ENCODE measurements at regions of chr3 and their contacts with region 1.

Region 1: DNA sequence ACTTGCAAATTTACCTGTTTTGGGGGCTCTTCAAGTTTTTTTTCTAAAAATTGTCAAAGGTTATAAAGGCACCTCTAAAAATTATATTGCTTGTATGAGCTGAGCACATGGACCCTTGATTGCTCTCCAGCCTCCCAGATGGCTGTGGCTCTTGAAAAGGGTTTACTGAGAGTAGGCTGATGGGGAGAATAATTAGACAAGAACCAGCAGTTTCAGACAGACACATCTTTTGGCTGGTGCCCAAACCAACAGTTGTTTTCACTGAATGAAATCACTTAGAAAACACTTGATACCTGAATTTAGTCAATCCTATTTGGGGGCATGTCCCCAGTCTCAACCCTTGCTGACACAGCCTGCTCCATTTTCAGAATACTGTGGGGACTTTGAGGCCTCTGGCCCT is 217.6 kb downstream of the KBTBD8 start:
- DNase-seq: no peak
- ATAC-seq: no peak
- H3K4me3 ChIP-seq: no peak overlapping the region
- H3K27ac ChIP-seq: no peak overlapping the region
- H3K4me1 ChIP-seq: no peaks in the 10 kb centered on the region
- H3K27me3 ChIP-seq: no peaks in the 10 kb centered on the region
- CTCF ChIP-seq: no peak

Region 2: DNA sequence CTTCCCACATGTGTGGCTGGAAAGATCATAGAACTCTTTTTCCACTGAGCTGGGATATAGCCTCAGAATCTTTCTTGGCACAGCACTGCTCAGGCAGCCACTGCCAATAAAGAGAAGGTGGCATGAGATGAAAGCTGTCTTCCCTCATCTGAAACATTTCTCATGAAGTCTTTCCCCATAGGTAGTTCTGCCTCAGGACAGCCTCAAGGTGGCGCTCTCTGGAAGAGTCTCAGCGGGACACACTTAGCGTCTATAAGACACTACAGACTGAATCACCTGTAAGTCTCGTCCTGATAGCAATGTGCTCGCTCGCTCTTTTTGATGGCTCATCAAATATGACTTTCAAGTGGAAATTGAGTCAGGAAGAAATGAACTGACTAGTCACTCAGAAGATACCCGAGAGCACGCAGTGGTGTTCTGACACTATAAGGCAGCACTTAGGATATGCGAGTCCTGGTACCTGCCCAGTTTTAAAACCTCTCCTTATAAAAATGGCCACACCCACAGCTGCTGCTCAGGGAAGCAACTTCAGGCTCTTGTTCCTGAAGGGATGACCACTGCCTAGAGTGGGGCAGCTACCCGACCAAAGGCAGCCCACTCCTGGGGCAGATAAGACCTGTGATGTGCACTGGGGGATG is 169.2 kb after region 1 on chr3:
- CTCF ChIA-PET with region 1: no interaction called
- POLR2A ChIA-PET with region 1: interaction called, 11 read pairs
- in situ Hi-C with region 1: no loop called
- intact Hi-C with region 1: no loop called
- DNase-seq: no peak
- ATAC-seq: no peak
- H3K4me3 ChIP-seq: no peak overlapping the region
- H3K27ac ChIP-seq: no peak overlapping the region
- H3K4me1 ChIP-seq: no peaks in the 10 kb centered on the region
- H3K27me3 ChIP-seq: no peaks in the 10 kb centered on the region
- CTCF ChIP-seq: peak; percentile 69